ENCODE measurements at regions of chr14 and their contacts with region 1.

Region 1: GRCh38 chr14:44897045-44897844 is 64.5 kb downstream of the KLHL28 start:
- DNase-seq: peak; percentile 100
- H3K4me3 ChIP-seq: peak overlapping the region; percentile 96 to 97
- H3K27ac ChIP-seq: peak overlapping the region; percentile 99 to 100
- H3K4me1 ChIP-seq: no peaks in the 10 kb centered on the region
- H3K27me3 ChIP-seq: no peaks in the 10 kb centered on the region
- CTCF ChIP-seq: no peak
- POLR2A ChIP-seq: no peak

Region 2: GRCh38 chr14:44778604-44779003 is 118.6 kb before region 1 on chr14:
- intact Hi-C with region 1: no loop called
- DNase-seq: no peak
- H3K4me3 ChIP-seq: no peak overlapping the region
- H3K27ac ChIP-seq: no peak overlapping the region
- H3K4me1 ChIP-seq: no peaks in the 10 kb centered on the region
- H3K27me3 ChIP-seq: no peaks in the 10 kb centered on the region
- CTCF ChIP-seq: no peak
- POLR2A ChIP-seq: no peak

Region 3: DNA sequence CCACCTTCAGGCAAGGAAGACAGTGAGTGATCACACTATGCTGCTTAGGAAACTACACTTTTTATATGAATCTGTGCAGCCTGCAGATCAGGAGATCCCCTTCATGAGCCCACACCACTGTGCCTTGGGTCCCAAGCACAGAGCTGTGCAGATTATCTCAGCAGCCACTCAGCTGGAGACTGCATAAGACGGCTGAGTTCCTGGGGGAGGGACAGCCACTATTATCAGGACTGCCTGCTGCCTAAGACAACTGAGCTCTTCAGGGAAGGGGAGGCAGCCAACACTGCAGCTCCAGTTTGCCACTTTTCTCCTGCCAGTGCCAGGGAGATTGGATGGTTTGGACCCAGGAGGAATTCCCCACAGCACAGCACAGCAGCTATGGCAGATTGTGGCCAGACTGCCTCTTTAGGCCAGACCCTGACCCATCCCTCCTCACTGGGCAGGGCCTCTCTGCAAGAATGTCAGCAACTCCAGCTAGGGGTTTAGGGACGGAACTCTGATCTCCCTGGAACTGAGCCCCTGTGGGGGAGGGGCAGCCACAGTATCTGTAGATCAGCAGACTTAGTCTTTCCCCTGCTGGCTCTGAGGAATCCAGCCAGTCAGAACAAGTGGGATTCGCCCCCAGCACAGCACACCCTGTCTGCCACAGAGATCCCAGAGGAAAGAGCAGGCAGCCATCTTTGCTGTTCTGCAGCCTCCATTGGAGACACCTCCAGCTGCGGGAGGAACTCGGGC is 76.8 kb before region 1 on chr14:
- intact Hi-C with region 1: no loop called
- DNase-seq: peak; percentile 77
- H3K4me3 ChIP-seq: no peak overlapping the region
- H3K27ac ChIP-seq: no peak overlapping the region
- H3K4me1 ChIP-seq: peaks cover 5% of the 10 kb centered on the region
- H3K27me3 ChIP-seq: no peaks in the 10 kb centered on the region
- CTCF ChIP-seq: no peak
- POLR2A ChIP-seq: no peak

Region 4: DNA sequence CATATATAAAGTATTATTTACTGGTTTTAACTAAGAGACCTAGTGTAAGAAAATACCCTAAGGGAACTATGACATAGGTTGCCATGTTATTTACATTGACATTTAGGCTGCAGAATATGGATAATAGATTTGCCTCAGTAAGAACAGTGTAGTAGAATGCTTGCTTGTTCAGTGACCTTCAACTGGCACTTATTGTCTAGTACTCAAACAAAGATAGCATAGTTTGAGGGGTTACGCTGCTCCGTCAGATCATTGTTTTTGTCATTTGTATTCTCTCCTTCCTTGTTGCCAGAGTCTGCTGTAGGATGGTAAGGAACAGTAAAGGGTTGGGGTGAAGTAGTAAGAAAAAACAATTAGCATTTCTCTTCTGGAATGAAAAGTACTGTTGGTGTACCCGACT is 98.0 kb after region 1 on chr14:
- intact Hi-C with region 1: no loop called
- DNase-seq: no peak
- H3K4me3 ChIP-seq: no peak overlapping the region
- H3K27ac ChIP-seq: no peak overlapping the region
- H3K4me1 ChIP-seq: no peaks in the 10 kb centered on the region
- H3K27me3 ChIP-seq: no peaks in the 10 kb centered on the region
- CTCF ChIP-seq: no peak
- POLR2A ChIP-seq: no peak

Region 5: DNA sequence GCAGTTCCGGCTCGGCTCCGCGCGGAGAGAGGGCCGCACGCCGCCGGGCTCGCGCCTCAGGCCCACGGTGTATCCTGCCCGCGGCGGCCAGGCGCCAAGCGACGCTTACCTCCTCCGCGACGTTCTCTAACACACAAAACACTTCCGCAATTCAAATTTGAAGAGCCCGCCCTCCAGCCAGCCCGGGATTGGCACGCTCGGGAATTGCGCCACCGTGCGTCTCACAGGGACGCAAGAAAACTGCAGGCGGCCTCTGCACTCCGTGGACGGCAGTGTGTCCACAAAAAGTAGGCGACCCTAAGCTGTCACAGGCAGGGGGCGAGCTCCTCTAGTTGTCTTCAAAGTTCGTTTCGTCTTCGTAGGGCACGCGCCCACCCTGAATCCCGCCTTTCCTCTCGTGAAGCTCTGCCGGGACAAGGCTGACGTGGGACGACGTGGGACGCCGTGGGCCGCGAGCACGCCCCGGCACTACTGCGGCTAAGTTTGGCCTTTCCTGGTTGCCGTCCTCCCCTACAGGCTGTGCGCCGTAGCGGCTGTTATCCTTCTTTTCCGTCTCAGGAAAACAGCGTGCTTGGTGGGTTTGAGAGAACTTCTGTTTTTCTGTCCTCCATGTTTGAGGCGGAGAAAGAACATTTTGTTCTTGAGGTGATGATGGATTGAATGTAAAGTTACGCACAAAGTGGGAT is 356.0 kb after region 1 on chr14 and contains the start of gene MIS18BP1:
- intact Hi-C with region 1: loop called (anchors 5 kb)
- DNase-seq: peak; percentile 98
- H3K4me3 ChIP-seq: peak within 1 kb of the TSS; percentile 75 to 77
- H3K27ac ChIP-seq: peak within 1 kb of the TSS; percentile 95 to 97
- H3K4me1 ChIP-seq: peaks cover 7% of the 10 kb centered on the region
- H3K27me3 ChIP-seq: no peaks in the 10 kb centered on the region
- CTCF ChIP-seq: peak; percentile 72 to 82 (median 79)
- POLR2A ChIP-seq: peak; percentile 3
- total RNA-seq, gene MIS18BP1: 60.8 to 71.5 TPM